ENCODE measurements at regions of chr11 and their contacts with region 1.

Region 1: GRCh38 chr11:25981998-25982397 is 349.9 kb upstream of the ANO3 start:
- DNase-seq: peak in 1 of 2 donors; percentile 23
- ATAC-seq: peak in 7 of 8 donors; percentile 75 to 91 (median 82)
- H3K4me3 ChIP-seq: no peak overlapping the region
- H3K27ac ChIP-seq: no peak overlapping the region
- H3K4me1 ChIP-seq: peaks cover 0 to 4% (median 0%) of the 10 kb centered on the region in 9 donors
- H3K27me3 ChIP-seq: no peaks in the 10 kb centered on the region
- CTCF ChIP-seq: peak; percentile 25 to 71 (median 53)

Region 2: DNA sequence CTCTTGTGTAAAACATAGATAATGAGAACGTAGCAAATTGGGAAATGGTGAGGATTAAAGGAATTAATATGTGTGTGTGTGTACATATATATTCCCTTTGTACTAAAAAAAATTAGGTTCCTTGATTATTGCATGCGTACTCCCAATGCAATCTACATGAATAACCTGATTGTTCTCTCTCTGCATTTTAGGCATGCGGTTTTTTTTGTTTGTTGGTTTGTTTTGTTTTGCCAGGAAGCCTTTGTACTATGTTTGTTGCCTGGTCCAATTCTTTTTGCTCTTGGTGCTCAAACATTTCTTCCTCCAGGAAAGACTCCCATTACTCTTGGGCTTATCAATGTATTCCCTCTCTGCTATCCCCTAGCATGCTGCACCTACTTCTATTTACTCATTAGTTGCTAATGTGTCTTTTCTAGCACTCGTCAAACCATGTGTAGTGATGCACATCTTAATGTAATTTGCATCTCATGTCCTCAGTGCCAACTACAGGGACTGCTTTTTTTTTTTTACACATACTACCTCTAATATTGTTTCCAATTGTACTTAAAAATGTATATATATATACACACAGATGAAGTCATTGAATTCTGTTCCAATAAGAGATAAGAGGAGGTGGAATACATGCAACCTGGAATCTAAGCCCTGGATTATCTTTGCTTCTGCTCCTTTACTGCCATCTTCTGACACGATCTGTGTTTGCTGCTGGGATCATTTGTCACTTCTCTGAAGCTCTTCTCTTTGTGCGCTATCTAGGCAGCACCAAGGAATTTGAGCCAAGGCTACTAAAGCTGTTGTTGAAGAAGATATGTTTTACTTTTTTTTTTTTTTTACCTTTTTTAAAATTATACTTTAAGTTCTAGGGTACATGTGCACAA is 152.7 kb after region 1 on chr11:
- intact Hi-C with region 1: loop called (anchors 2 to 5 kb)
- DNase-seq: no peak
- ATAC-seq: peak in 1 of 8 donors; percentile 51
- H3K4me3 ChIP-seq: no peak overlapping the region
- H3K27ac ChIP-seq: no peak overlapping the region
- H3K4me1 ChIP-seq: no peaks in the 10 kb centered on the region
- H3K27me3 ChIP-seq: no peaks in the 10 kb centered on the region
- CTCF ChIP-seq: peak in 8 of 9 donors; percentile 14 to 56 (median 38)

Region 3: DNA sequence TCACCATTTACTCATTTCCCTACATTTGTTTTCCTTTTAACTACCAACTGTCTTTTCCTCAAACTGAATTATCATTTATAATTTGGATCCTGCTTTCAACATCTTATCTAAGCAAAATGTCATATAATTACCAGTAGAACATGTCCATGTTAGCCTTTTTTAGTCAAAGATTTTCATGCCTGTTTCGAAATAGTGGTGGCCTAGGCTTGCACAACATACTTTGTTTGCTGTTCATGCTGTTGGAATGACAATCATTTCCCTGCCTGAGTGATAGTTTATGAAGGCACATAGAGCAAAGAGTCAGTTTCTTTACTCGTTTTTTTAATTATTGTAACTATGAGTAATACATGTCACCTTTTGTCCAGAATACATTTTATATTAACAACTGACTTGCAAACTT is 205.6 kb after region 1 on chr11:
- intact Hi-C with region 1: no loop called
- DNase-seq: no peak
- ATAC-seq: peak in 2 of 8 donors; percentile 38 to 60
- H3K4me3 ChIP-seq: no peak overlapping the region
- H3K27ac ChIP-seq: no peak overlapping the region
- H3K4me1 ChIP-seq: peaks cover 0 to 5% (median 0%) of the 10 kb centered on the region in 9 donors
- H3K27me3 ChIP-seq: no peaks in the 10 kb centered on the region
- CTCF ChIP-seq: no peak

Region 4: GRCh38 chr11:26227296-26227695 is 245.3 kb after region 1 on chr11:
- intact Hi-C with region 1: loop called in 8 of 10 experiments (anchors 1 to 10 kb)
- DNase-seq: no peak
- ATAC-seq: peak in 5 of 8 donors; percentile 38 to 67 (median 44)
- H3K4me3 ChIP-seq: no peak overlapping the region
- H3K27ac ChIP-seq: no peak overlapping the region
- H3K4me1 ChIP-seq: no peaks in the 10 kb centered on the region
- H3K27me3 ChIP-seq: no peaks in the 10 kb centered on the region
- CTCF ChIP-seq: peak; percentile 5 to 57 (median 39)

Region 5: GRCh38 chr11:26276798-26277424 is 294.9 kb after region 1 on chr11:
- intact Hi-C with region 1: loop called in 7 of 10 experiments (anchors 1 to 5 kb)
- DNase-seq: peak; percentile 11 to 28
- ATAC-seq: peak in 3 of 8 donors; percentile 56 to 73 (median 58)
- H3K4me3 ChIP-seq: no peak overlapping the region
- H3K27ac ChIP-seq: no peak overlapping the region
- H3K4me1 ChIP-seq: no peaks in the 10 kb centered on the region
- H3K27me3 ChIP-seq: peaks cover 0 to 28% (median 0%) of the 10 kb centered on the region in 7 donors
- CTCF ChIP-seq: peak; percentile 75 to 97 (median 91)

Region 6: DNA sequence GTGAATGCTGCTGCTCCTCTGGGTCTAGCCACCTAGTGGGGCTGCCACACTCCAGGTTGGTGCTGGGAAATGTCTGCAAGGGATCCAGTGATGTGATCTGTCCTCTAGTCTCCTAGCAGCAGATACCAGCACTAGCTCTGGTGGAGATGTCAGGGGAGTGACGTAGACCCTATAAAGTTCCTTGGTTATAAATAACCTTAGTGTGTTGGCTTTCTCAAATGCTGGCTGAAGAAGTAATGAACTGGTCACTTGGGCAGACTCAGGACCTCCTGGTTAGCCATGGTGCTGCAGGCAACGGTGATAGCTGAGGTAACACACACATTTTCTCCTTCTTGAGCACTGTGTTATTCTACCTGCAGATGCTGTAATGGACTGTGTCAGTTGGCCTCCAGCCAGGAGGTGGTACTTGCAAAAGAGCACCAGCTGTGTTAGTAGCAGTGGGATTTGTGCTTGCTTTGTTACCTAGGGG is 1094.2 kb after region 1 on chr11:
- intact Hi-C with region 1: no loop called
- DNase-seq: no peak
- ATAC-seq: no peak
- H3K4me3 ChIP-seq: no peak overlapping the region
- H3K27ac ChIP-seq: no peak overlapping the region
- H3K4me1 ChIP-seq: no peaks in the 10 kb centered on the region
- H3K27me3 ChIP-seq: no peaks in the 10 kb centered on the region
- CTCF ChIP-seq: no peak